ENCODE measurements at regions of chr22 and their contacts with region 1.

Region 1: DNA sequence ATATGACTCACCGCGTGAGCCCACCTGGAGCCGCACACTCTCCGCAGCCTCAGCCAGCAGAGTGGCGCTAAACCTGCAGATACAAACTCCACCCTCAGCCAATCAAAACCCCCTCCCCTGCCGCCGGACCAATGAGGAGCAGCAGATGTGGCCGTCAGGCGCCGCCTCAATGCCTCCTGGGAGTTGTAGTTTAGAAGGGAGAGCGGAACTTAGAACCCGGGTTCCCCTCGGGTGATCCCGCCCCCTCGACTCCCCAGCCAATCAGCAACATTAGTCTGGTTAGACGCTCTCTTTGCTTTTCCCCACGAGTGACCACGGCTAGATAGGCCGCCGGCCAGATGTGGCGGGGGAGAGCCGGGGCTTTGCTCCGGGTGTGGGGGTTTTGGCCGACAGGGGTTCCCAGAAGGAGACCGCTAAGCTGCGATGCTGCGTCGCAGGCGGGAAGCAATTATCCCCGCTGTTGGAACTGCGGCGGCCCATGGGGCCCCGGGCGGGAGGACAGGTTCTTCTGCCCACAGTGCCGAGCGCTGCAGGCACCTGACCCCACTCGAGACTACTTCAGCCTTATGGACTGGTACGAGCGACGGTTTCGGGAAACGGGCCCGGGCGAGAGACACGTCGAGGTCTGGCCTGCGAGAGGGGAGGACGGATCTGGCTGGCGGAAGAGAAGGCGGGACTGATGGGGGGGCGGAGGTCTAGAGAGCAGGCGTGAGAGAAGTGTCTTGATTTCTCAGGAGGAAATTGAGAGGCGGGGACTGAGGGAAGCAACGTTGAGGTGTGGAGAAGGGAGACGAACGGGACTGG is at the starts of genes CHEK2 and HSCB:
- DNase-seq: peak; percentile 99
- H3K4me3 Mint-ChIP-seq: peak within 1 kb of the TSS; percentile 87
- H3K27ac Mint-ChIP-seq: peak within 1 kb of the TSS; percentile 84
- H3K4me1 Mint-ChIP-seq: peaks cover 31% of the 10 kb centered on the region
- H3K27me3 Mint-ChIP-seq: no peaks in the 10 kb centered on the region
- total RNA-seq, gene CHEK2: 30.0 to 36.0 TPM
- total RNA-seq, gene HSCB: 16.5 to 18.1 TPM

Region 2: GRCh38 chr22:28674121-28674563 is 67.8 kb before region 1 on chr22:
- CTCF ChIA-PET with region 1: no interaction called
- POLR2A ChIA-PET with region 1: no interaction called
- intact Hi-C with region 1: loop called (anchors 5 kb)
- DNase-seq: peak; percentile 18
- H3K4me3 Mint-ChIP-seq: peak overlapping the region; percentile 72
- H3K27ac Mint-ChIP-seq: peak overlapping the region; percentile 92
- H3K4me1 Mint-ChIP-seq: peaks cover 22% of the 10 kb centered on the region
- H3K27me3 Mint-ChIP-seq: peaks cover 45% of the 10 kb centered on the region

Region 3: DNA sequence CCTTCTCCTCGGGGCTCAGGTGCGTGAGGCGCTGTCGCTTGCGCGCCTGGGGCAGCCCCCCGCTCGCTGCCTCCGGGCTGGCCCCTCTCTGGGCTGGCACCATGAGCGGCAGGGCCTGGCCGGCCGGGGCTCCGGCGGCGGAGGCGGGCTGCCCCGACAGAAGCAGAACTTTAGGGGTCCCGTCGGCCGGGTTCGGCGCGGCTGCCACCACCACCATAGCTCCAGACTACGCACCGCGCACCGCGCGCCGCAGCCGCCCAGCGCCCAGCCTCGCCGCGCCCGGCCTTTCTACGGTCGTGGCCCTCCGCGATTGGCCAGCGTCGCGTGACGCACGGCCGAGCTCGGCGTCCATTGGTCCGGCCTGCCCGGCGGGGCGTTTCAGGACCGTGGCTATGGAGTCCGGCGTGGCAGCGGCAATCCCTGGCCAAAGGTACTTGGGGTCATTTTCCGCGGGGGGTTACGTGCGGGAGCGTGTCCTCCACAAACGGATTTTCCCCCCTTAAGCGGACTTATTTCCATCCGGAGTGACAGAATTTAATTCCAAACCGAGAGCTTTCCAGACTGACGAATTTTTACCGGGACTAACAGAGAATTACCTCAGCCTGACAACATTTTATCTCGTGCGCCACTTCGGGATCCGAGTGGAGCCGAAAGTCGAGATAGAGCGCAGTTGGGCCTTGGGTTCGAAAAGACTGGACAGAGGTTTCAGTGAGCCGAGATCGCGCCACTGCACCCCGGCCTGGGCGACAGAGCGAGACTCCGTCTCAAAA is 58.5 kb after region 1 on chr22 and contains the start of gene XBP1:
- CTCF ChIA-PET with region 1: no interaction called
- POLR2A ChIA-PET with region 1: interaction called, 21 read pairs
- intact Hi-C with region 1: loop called (anchors 1 kb)
- DNase-seq: peak; percentile 92
- H3K4me3 Mint-ChIP-seq: peak within 1 kb of the TSS; percentile 94
- H3K27ac Mint-ChIP-seq: peak within 1 kb of the TSS; percentile 96
- H3K4me1 Mint-ChIP-seq: peaks cover 46% of the 10 kb centered on the region
- H3K27me3 Mint-ChIP-seq: no peaks in the 10 kb centered on the region
- total RNA-seq, gene XBP1: 128 to 132 TPM

Region 4: GRCh38 chr22:28882878-28883656 is 141.1 kb after region 1 on chr22 and contains the start of gene ZNRF3:
- CTCF ChIA-PET with region 1: no interaction called
- POLR2A ChIA-PET with region 1: no interaction called
- intact Hi-C with region 1: loop called (anchors 1 kb)
- DNase-seq: peak; percentile 93
- H3K4me3 Mint-ChIP-seq: peak within 1 kb of the TSS; percentile 78
- H3K27ac Mint-ChIP-seq: no peak within 1 kb of the TSS
- H3K4me1 Mint-ChIP-seq: peaks cover 15% of the 10 kb centered on the region
- H3K27me3 Mint-ChIP-seq: peaks cover 22% of the 10 kb centered on the region
- total RNA-seq, gene ZNRF3: 1.3 to 1.5 TPM

Region 5: DNA sequence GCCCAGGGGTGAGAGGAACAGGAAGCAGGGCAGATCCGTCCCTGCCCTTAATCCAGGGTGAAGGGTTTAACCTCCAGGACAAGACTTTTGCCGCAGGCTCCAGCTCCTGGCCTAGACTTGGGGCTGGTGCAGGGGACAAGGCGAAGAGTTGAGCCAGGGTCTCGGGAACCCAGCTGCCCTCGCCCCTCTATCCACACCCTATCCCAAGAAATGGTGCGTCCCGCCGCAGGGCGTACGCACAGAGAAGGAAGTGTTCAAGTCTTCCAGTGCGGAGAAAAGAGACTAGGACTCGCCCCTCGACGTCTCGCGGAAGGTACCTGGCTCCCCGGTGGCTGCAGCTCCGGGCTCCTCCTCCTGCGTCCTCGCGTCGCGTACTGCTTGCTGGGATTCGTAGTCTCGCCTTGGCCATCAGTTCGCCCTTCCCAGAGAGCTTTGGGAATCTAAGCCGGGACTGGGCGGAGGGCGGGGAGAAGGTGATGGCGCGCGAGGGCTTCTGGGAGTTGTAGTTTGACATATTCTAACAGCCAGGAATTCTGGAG is 1024.7 kb after region 1 on chr22 and contains the start of gene ZMAT5:
- CTCF ChIA-PET with region 1: no interaction called
- POLR2A ChIA-PET with region 1: no interaction called
- intact Hi-C with region 1: loop called (anchors 5 kb)
- DNase-seq: peak; percentile 96
- H3K4me3 Mint-ChIP-seq: peak within 1 kb of the TSS; percentile 100
- H3K27ac Mint-ChIP-seq: peak within 1 kb of the TSS; percentile 94
- H3K4me1 Mint-ChIP-seq: peaks cover 26% of the 10 kb centered on the region
- H3K27me3 Mint-ChIP-seq: no peaks in the 10 kb centered on the region
- total RNA-seq, gene ZMAT5: 18.1 to 20.6 TPM